Naive thymus-derived CD4-positive, alpha-beta T cell (primary cell): ENCODE measurements at regions of chr14 and their contacts with region 1.

Region 1: DNA sequence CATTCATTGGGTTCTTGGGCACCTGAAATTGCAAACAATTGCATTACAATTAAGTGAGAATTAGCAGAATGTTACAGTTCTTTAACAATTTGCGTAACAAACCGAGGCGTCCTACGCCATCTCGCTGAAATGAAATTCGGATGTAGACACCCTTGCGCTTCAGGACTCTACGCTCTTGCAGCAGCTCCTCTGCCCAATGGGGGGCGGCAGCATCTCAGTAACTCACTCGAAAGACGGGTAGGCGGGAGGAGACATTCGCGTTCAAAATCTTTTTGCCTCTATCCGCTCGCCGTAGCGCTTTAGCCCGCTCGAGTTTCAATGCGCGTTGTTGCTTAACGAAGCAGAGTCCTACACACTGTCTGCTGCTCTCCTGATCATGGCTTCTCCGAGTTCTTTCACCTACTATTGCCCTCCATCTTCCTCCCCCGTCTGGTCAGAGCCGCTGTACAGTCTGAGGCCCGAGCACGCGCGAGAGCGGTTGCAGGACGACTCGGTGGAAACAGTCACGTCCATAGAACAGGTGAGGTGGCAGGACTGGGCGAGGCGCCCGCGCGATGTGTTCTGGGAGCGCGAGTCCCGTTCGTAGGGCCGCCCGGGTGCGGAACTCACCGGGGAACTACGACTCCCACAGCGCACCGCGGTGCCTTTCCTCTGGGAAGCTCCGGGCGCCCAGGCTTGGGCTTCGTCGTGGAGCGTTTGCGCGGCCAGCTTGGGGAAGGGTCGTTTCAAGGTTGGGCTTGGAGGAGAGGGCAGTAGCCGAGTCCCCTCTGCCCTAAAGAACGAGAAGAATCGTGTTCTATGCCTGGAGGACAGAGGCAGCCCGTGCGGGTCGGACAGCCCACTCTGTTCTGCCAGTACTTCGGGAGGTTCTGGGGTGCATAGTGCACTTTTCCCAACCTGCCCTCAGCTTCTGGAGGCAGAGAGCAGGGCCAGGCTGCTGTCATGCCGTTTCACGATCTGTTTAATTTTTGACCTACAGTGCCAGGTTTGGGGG is at the start of gene FNTB:
- DNase-seq: peak; percentile 80 to 96 (median 94)
- ATAC-seq: peak; percentile 95
- H3K4me3 ChIP-seq: peak within 1 kb of the TSS; percentile 97
- H3K4me3 Mint-ChIP-seq: peak within 1 kb of the TSS; percentile 88 to 100 (median 95)
- H3K27ac ChIP-seq: peak within 1 kb of the TSS; percentile 76
- H3K27ac Mint-ChIP-seq: peak within 1 kb of the TSS; percentile 92 to 99 (median 96)
- H3K4me1 ChIP-seq: peaks cover 14 to 38% of the 10 kb centered on the region in 2 donors
- H3K4me1 Mint-ChIP-seq: peaks cover 41 to 68% (median 60%) of the 10 kb centered on the region in 7 donors
- H3K27me3 ChIP-seq: no peaks in the 10 kb centered on the region
- H3K27me3 Mint-ChIP-seq: peaks cover 0 to 29% (median 3%) of the 10 kb centered on the region in 5 donors
- total RNA-seq, gene FNTB: 10.4 to 19.7 (median 12.9) TPM

Region 2: GRCh38 chr14:64338616-64339316 is 648.1 kb before region 1 on chr14:
- CTCF ChIA-PET with region 1: no interaction called
- POLR2A ChIA-PET with region 1: no interaction called
- intact Hi-C with region 1: loop called (anchors 1 to 2 kb)
- DNase-seq: peak; percentile 50 to 84 (median 79)
- ATAC-seq: peak; percentile 87
- H3K4me3 ChIP-seq: peak overlapping the region; percentile 57
- H3K4me3 Mint-ChIP-seq: peak overlapping the region; percentile 87 to 99 (median 92)
- H3K27ac ChIP-seq: peak overlapping the region; percentile 72
- H3K27ac Mint-ChIP-seq: peak overlapping the region; percentile 81 to 91 (median 86)
- H3K4me1 ChIP-seq: peaks cover 5 to 10% of the 10 kb centered on the region in 2 donors
- H3K4me1 Mint-ChIP-seq: peaks cover 6 to 36% (median 19%) of the 10 kb centered on the region in 7 donors
- H3K27me3 ChIP-seq: no peaks in the 10 kb centered on the region
- H3K27me3 Mint-ChIP-seq: no peaks in the 10 kb centered on the region

Region 3: DNA sequence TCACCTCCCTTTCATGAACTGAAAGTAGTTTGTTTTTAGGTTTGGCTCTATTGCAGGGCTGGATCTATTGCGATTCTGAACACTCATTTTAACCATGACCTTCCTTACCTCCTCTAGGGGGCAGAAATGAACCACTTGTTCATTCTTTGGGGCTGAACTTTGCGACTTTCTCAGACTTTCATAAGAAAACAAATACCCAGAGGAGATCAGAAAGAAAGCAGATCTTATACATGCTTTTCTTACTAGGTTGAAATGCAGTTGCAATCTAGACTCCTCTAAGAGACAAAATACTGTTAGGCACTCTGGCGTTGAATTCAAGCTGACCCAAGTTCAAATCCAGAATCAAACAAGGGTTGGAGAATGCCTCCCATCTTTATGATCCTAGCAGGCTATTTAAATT is 315.3 kb before region 1 on chr14:
- CTCF ChIA-PET with region 1: interaction called, 7 read pairs
- POLR2A ChIA-PET with region 1: no interaction called
- intact Hi-C with region 1: loop called (anchors 1 to 5 kb)
- DNase-seq: peak in 7 of 9 donors; percentile 25 to 66 (median 50)
- ATAC-seq: peak; percentile 64
- H3K4me3 ChIP-seq: no peak overlapping the region
- H3K4me3 Mint-ChIP-seq: no peak overlapping the region
- H3K27ac ChIP-seq: no peak overlapping the region
- H3K27ac Mint-ChIP-seq: no peak overlapping the region
- H3K4me1 ChIP-seq: peaks cover 7 to 16% of the 10 kb centered on the region in 2 donors
- H3K4me1 Mint-ChIP-seq: peaks cover 9 to 38% (median 15%) of the 10 kb centered on the region in 7 donors
- H3K27me3 ChIP-seq: no peaks in the 10 kb centered on the region
- H3K27me3 Mint-ChIP-seq: peaks cover 0 to 26% (median 0%) of the 10 kb centered on the region in 5 donors

Region 4: GRCh38 chr14:64800000-64800399 is 186.9 kb before region 1 on chr14:
- CTCF ChIA-PET with region 1: no interaction called
- POLR2A ChIA-PET with region 1: no interaction called
- intact Hi-C with region 1: no loop called
- DNase-seq: peak in 1 of 9 donors; percentile 13
- ATAC-seq: peak; percentile 9
- H3K4me3 ChIP-seq: no peak overlapping the region
- H3K4me3 Mint-ChIP-seq: no peak overlapping the region
- H3K27ac ChIP-seq: no peak overlapping the region
- H3K27ac Mint-ChIP-seq: no peak overlapping the region
- H3K4me1 ChIP-seq: no peaks in the 10 kb centered on the region
- H3K4me1 Mint-ChIP-seq: peaks cover 0 to 2% (median 0%) of the 10 kb centered on the region in 7 donors
- H3K27me3 ChIP-seq: no peaks in the 10 kb centered on the region
- H3K27me3 Mint-ChIP-seq: peaks cover 0 to 17% (median 0%) of the 10 kb centered on the region in 5 donors

Region 5: GRCh38 chr14:64891839-64892375 is 95.0 kb before region 1 on chr14:
- CTCF ChIA-PET with region 1: interaction called, 13 read pairs
- POLR2A ChIA-PET with region 1: no interaction called
- intact Hi-C with region 1: loop called in 1 of 2 experiments (anchors 5 kb)
- DNase-seq: peak in 7 of 9 donors; percentile 41 to 68 (median 61)
- ATAC-seq: peak; percentile 90
- H3K4me3 ChIP-seq: no peak overlapping the region
- H3K4me3 Mint-ChIP-seq: no peak overlapping the region
- H3K27ac ChIP-seq: no peak overlapping the region
- H3K27ac Mint-ChIP-seq: no peak overlapping the region
- H3K4me1 ChIP-seq: no peaks in the 10 kb centered on the region
- H3K4me1 Mint-ChIP-seq: peaks cover 0 to 3% (median 0%) of the 10 kb centered on the region in 7 donors
- H3K27me3 ChIP-seq: no peaks in the 10 kb centered on the region
- H3K27me3 Mint-ChIP-seq: peaks cover 0 to 39% (median 9%) of the 10 kb centered on the region in 5 donors

Region 6: GRCh38 chr14:64963611-64964010 is 23.3 kb before region 1 on chr14:
- CTCF ChIA-PET with region 1: no interaction called
- POLR2A ChIA-PET with region 1: no interaction called
- intact Hi-C with region 1: no loop called
- DNase-seq: no peak
- ATAC-seq: no peak
- H3K4me3 ChIP-seq: no peak overlapping the region
- H3K4me3 Mint-ChIP-seq: no peak overlapping the region
- H3K27ac ChIP-seq: no peak overlapping the region
- H3K27ac Mint-ChIP-seq: no peak overlapping the region
- H3K4me1 ChIP-seq: no peaks in the 10 kb centered on the region
- H3K4me1 Mint-ChIP-seq: peaks cover 9 to 49% (median 18%) of the 10 kb centered on the region in 7 donors
- H3K27me3 ChIP-seq: no peaks in the 10 kb centered on the region
- H3K27me3 Mint-ChIP-seq: no peaks in the 10 kb centered on the region

Region 7: DNA sequence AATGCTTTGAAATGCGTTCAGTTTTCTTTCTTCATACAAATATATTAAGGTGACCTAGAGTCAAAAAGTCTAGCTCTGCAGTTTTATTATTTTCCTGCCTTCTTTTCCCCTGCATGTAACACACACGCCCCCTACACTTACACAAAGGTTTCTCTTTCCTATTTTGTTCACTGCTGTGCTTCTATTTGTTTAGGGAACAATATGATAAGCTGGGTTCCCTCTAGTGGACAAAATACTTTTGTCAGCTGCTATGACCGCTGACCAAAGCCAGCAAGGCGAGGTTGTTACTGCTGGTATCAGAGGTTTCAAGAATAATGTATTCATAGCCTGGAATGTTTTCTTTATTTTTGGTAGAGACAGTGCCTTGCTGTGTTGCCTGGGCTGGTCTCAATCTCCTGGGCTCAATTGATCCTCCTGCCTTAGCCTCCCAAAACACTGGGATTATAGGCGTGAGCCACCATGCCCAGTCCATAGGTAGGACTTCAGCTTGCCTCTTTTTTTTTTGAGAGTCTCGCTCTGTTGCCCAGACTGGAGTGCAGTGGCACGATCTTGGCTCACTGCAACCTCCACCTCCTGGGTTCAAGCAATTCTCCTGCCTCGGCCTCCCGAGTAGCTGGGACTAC is 33.2 kb after region 1 on chr14:
- CTCF ChIA-PET with region 1: interaction called, 6 read pairs
- POLR2A ChIA-PET with region 1: no interaction called
- intact Hi-C with region 1: loop called (anchors 1 kb)
- DNase-seq: peak in 2 of 9 donors; percentile 3 to 14
- ATAC-seq: peak; percentile 76
- H3K4me3 ChIP-seq: no peak overlapping the region
- H3K4me3 Mint-ChIP-seq: no peak overlapping the region
- H3K27ac ChIP-seq: no peak overlapping the region
- H3K27ac Mint-ChIP-seq: peak overlapping the region in 1 of 9 donors; percentile 0
- H3K4me1 ChIP-seq: no peaks in the 10 kb centered on the region
- H3K4me1 Mint-ChIP-seq: peaks cover 0 to 5% (median 0%) of the 10 kb centered on the region in 7 donors
- H3K27me3 ChIP-seq: no peaks in the 10 kb centered on the region
- H3K27me3 Mint-ChIP-seq: no peaks in the 10 kb centered on the region

Region 8: DNA sequence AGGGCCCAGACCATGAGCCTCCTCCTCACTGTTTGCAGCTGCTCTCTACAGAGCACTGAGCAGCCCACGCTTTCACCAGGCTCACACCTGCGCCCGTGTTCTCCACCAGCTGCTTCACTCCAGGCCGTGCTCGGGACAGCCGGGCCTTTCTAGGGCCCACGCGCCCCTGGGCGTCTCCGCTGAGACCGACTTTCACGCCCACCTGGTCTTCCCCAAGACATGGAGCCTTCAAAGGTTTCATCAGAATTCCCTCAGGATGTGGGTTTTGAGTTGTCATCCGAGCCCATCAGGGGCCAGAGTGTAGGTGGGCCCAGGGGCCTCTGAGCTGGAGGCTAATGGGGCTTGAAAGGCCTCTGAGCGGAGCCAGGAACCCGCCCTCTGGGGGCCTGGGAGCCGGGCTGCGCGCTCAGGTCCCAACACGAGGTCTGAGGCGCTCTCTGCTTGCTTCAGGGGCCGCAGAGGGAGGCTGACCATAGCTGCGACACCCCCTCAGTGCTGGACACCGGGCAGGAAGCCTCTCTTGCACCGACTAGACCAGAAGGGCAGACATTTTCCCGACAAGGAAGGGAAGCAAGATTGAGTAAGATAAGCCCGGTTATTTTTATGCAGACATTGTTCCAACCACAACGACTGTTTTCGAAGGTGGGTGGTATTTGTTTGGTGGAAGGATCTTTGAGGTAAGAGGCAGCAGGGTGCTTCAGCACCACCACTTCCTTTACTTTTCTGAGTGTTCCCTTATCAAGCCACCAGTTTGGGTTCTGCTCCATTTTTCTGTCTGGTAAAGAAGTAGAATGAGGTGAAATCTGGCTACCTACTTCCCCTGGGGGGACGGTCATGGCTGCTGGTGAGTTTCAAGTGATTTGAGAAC is 300.6 kb after region 1 on chr14:
- CTCF ChIA-PET with region 1: no interaction called
- POLR2A ChIA-PET with region 1: no interaction called
- intact Hi-C with region 1: loop called in 1 of 2 experiments (anchors 1 kb)
- DNase-seq: peak in 8 of 9 donors; percentile 51 to 80 (median 75)
- ATAC-seq: peak; percentile 84
- H3K4me3 ChIP-seq: peak overlapping the region; percentile 27
- H3K4me3 Mint-ChIP-seq: peak overlapping the region; percentile 75 to 91 (median 85)
- H3K27ac ChIP-seq: peak overlapping the region; percentile 69
- H3K27ac Mint-ChIP-seq: peak overlapping the region; percentile 90 to 100 (median 98)
- H3K4me1 ChIP-seq: peaks cover 49 to 59% of the 10 kb centered on the region in 2 donors
- H3K4me1 Mint-ChIP-seq: peaks cover 51 to 90% (median 77%) of the 10 kb centered on the region in 7 donors
- H3K27me3 ChIP-seq: no peaks in the 10 kb centered on the region
- H3K27me3 Mint-ChIP-seq: no peaks in the 10 kb centered on the region

Region 9: GRCh38 chr14:65958664-65959562 is 972.0 kb after region 1 on chr14:
- CTCF ChIA-PET with region 1: no interaction called
- POLR2A ChIA-PET with region 1: no interaction called
- intact Hi-C with region 1: loop called in 1 of 2 experiments (anchors 1 kb)
- DNase-seq: peak in 6 of 9 donors; percentile 15 to 52 (median 42)
- ATAC-seq: peak; percentile 66
- H3K4me3 ChIP-seq: no peak overlapping the region
- H3K4me3 Mint-ChIP-seq: peak overlapping the region in 1 of 10 donors; percentile 50
- H3K27ac ChIP-seq: no peak overlapping the region
- H3K27ac Mint-ChIP-seq: peak overlapping the region in 6 of 9 donors; percentile 3 to 80 (median 39)
- H3K4me1 ChIP-seq: peaks cover 12 to 14% of the 10 kb centered on the region in 2 donors
- H3K4me1 Mint-ChIP-seq: peaks cover 0 to 47% (median 20%) of the 10 kb centered on the region in 7 donors
- H3K27me3 ChIP-seq: no peaks in the 10 kb centered on the region
- H3K27me3 Mint-ChIP-seq: peaks cover 0 to 17% (median 0%) of the 10 kb centered on the region in 5 donors